H1 (cell line): ENCODE measurements at regions of chr12 and their contacts with region 1.

Region 1: DNA sequence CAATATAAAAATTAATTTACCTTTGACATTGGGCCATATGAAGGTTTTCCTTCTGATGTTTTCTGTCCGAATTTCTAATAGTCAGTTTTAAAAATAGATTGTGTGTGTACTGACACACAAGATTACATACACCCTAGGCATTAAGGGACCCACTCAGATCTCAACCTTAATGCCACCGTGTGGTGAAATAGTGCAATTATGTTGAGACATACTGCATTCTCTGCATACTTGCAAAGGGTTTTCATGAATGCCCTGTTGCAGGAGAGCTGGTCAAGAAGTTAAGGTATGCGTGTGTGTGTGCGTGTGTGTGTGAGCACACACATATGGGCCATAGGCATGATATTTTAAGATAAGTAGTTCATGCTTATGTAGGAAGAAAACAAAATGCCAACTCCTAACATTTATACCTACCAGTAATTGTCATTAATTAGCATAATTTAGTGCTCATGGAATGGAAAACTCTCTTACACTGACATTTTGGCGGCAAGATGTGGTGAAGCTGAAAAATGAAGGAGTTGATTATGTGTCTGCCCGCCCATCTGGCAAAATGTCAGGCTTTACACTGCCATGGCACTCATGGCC is 58.8 kb downstream of the PIK3C2G start:
- DNase-seq: peak in 1 of 2 experiments; percentile 3
- H3K4me3 ChIP-seq: no peak overlapping the region
- H3K27ac ChIP-seq: no peak overlapping the region
- H3K4me1 ChIP-seq: peaks cover 0 to 2% (median 0%) of the 10 kb centered on the region in 4 experiments; a peak in 1 of 7 replicates
- H3K27me3 ChIP-seq: no peaks in the 10 kb centered on the region
- CTCF ChIP-seq: peak in 1 of 3 experiments; percentile 63; a peak in 2 of 4 replicates
- EP300 ChIP-seq: no peak
- POLR2A ChIP-seq: no peak
- RAD21 ChIP-seq: peak; percentile 57 to 59

Region 2: DNA sequence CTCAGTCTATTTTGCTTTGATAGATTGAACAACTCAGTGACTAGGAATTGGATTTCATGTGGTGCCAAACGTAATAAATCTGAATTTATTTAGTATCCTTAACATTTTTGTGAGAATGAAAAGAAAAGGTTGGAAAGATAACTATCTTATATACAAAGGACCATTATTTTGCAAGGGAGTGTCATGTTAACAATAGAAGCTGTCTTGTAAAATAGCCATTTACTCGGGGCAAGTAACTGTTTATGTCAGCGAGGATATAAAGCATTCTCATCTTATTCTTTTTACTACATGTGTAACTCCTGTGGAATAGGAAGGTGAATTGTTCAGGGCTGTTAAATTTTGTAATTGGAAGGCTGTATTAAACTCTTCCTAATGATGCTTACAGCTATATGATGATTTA is 236.0 kb before region 1 on chr12:
- CTCF ChIA-PET with region 1: no interaction called
- POLR2A ChIA-PET with region 1: no interaction called
- DNase-seq: no peak
- H3K4me3 ChIP-seq: no peak overlapping the region
- H3K27ac ChIP-seq: no peak overlapping the region
- H3K4me1 ChIP-seq: no peaks in the 10 kb centered on the region
- H3K27me3 ChIP-seq: no peaks in the 10 kb centered on the region
- CTCF ChIP-seq: no peak
- EP300 ChIP-seq: no peak
- POLR2A ChIP-seq: no peak
- RAD21 ChIP-seq: no peak

Region 3: GRCh38 chr12:18101043-18101442 is 219.1 kb before region 1 on chr12:
- CTCF ChIA-PET with region 1: no interaction called
- POLR2A ChIA-PET with region 1: no interaction called
- DNase-seq: no peak
- H3K4me3 ChIP-seq: no peak overlapping the region
- H3K27ac ChIP-seq: no peak overlapping the region
- H3K4me1 ChIP-seq: no peaks in the 10 kb centered on the region
- H3K27me3 ChIP-seq: no peaks in the 10 kb centered on the region
- CTCF ChIP-seq: no peak
- EP300 ChIP-seq: no peak
- POLR2A ChIP-seq: no peak
- RAD21 ChIP-seq: no peak

Region 4: DNA sequence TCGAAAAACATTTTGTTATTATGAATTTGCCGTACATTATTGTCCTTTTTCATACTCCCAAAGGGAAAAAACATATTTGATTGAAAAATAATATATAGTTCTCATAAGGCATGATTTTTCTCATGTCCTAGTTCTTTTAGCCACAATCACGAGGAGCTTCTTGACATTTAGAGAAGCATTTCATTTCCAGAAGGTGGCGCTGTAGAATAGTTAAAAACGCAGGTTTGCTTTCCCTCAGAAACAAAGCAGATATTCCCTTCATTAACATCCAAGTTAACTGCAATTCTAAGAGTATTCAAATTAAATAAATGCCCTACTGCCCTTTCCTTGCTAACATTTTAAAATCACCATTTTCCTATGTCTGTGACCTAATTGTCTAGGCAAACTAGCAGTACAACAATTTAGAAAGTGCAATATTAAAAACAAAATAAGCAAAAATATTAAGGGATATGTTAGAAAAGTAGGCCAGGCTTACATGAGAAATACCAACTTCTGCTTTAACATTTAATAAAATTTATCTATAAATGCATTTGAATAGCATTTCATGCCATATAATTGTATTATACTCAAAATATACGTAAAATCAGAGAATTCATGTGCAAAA is 69.7 kb before region 1 on chr12:
- CTCF ChIA-PET with region 1: interaction called, 53 read pairs
- POLR2A ChIA-PET with region 1: no interaction called
- DNase-seq: peak in 1 of 2 experiments; percentile 2
- H3K4me3 ChIP-seq: no peak overlapping the region
- H3K27ac ChIP-seq: no peak overlapping the region
- H3K4me1 ChIP-seq: peaks cover 0 to 3% (median 0%) of the 10 kb centered on the region in 4 experiments; a peak in 1 of 7 replicates
- H3K27me3 ChIP-seq: no peaks in the 10 kb centered on the region
- CTCF ChIP-seq: peak in 2 of 3 experiments; percentile 53 to 58; a peak in 2 of 4 replicates
- EP300 ChIP-seq: no peak
- POLR2A ChIP-seq: no peak
- RAD21 ChIP-seq: peak; percentile 84 to 85

Region 5: GRCh38 chr12:18261253-18261652 is 58.9 kb before region 1 on chr12 and contains the start of gene PIK3C2G:
- CTCF ChIA-PET with region 1: interaction called, 53 read pairs
- POLR2A ChIA-PET with region 1: no interaction called
- DNase-seq: no peak
- H3K4me3 ChIP-seq: no peak within 1 kb of the TSS
- H3K27ac ChIP-seq: no peak within 1 kb of the TSS
- H3K4me1 ChIP-seq: no peaks in the 10 kb centered on the region
- H3K27me3 ChIP-seq: no peaks in the 10 kb centered on the region
- CTCF ChIP-seq: no peak
- EP300 ChIP-seq: no peak
- POLR2A ChIP-seq: no peak
- RAD21 ChIP-seq: no peak
- total RNA-seq, gene PIK3C2G: not detected in 2 replicates

Region 6: GRCh38 chr12:18306311-18306710 is 13.8 kb before region 1 on chr12:
- CTCF ChIA-PET with region 1: interaction called, 21 read pairs
- POLR2A ChIA-PET with region 1: no interaction called
- DNase-seq: no peak
- H3K4me3 ChIP-seq: no peak overlapping the region
- H3K27ac ChIP-seq: no peak overlapping the region
- H3K4me1 ChIP-seq: no peaks in the 10 kb centered on the region
- H3K27me3 ChIP-seq: no peaks in the 10 kb centered on the region
- CTCF ChIP-seq: no peak
- EP300 ChIP-seq: no peak
- POLR2A ChIP-seq: no peak
- RAD21 ChIP-seq: no peak

Region 7: GRCh38 chr12:18332173-18332572 is 12.0 kb after region 1 on chr12:
- CTCF ChIA-PET with region 1: interaction called, 17 read pairs
- POLR2A ChIA-PET with region 1: no interaction called
- DNase-seq: no peak
- H3K4me3 ChIP-seq: no peak overlapping the region
- H3K27ac ChIP-seq: no peak overlapping the region; the same call in 1 of the 2 replicates
- H3K4me1 ChIP-seq: 0 out of 7 replicates have a peak, but pooled peaks cover 0 to 2% (median 0%) of the 10 kb centered on the region in 4 experiments
- H3K27me3 ChIP-seq: no peaks in the 10 kb centered on the region
- CTCF ChIP-seq: no peak
- EP300 ChIP-seq: no peak
- POLR2A ChIP-seq: no peak
- RAD21 ChIP-seq: no peak